ENCODE measurements at regions of chr17 and their contacts with region 1.

Region 1: DNA sequence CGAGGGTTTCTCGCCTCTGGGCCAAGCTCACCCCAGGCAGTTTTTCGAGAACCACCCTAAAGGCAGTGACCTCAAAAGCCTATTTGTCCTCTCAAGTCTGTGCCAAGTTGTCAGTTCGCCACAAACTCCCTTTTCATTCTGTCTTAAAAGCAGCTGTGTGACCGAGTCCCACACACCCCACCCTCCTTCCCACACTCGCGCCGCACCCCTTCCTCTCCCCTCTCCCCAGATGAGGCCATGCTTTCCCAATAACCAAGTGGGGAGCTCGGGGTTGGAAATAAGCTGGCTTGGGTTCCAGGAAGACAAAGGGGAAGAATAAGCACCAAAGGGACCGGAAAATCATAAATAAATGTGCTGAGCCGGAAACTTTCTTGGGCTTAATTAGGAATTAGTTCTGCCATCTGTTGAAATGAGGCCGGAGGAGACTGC is 36.7 kb downstream of the GRIN2C start:
- DNase-seq: peak; percentile 42 to 47
- ATAC-seq: peak in 7 of 8 donors; percentile 35 to 74 (median 68)
- H3K4me3 ChIP-seq: no peak overlapping the region
- H3K27ac ChIP-seq: peak overlapping the region in 8 of 10 donors; percentile 35 to 66 (median 50)
- H3K4me1 ChIP-seq: peaks cover 0 to 22% (median 5%) of the 10 kb centered on the region in 9 donors
- H3K27me3 ChIP-seq: no peaks in the 10 kb centered on the region
- CTCF ChIP-seq: no peak

Region 2: GRCh38 chr17:74956093-74956492 is 133.1 kb after region 1 on chr17:
- intact Hi-C with region 1: loop called in 1 of 10 experiments (anchors 1 kb)
- DNase-seq: no peak
- ATAC-seq: no peak
- H3K4me3 ChIP-seq: no peak overlapping the region
- H3K27ac ChIP-seq: no peak overlapping the region
- H3K4me1 ChIP-seq: no peaks in the 10 kb centered on the region
- H3K27me3 ChIP-seq: peaks cover 0 to 6% (median 0%) of the 10 kb centered on the region in 7 donors
- CTCF ChIP-seq: no peak

Measured in heart right ventricle (tissue), 16 donors.